AG04449 (cell line): ENCODE measurements at regions of chr5 and their contacts with region 1.

Region 1: DNA sequence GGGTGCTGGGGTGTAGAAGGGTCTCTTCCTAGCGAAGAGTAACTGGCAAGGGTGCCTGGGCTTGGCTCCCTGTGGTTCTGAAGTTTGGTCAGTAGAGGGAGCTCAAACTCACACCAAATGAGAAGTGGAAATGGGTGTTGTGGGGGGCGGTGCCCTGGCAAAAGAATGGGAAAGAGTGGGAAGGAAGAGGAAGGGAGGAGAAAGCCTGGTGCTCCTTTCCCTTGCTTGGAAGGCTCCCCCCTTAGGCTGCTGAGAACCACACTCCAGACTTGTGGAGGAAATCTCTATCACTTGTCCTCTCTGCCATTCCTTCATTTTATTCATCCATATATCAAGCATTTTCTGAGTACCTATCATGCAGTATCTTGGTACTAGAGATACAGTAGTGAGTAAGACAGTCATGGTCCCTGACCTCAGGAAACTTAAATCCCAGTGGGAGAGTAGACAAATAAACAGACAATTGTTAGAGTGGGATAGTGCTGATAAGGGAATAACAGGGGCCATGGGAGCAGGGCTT is 13.0 kb downstream of the SLC4A9 start:
- DNase-seq: no peak
- H3K4me3 ChIP-seq: no peak overlapping the region
- CTCF ChIP-seq: peak; percentile 76

Region 2: DNA sequence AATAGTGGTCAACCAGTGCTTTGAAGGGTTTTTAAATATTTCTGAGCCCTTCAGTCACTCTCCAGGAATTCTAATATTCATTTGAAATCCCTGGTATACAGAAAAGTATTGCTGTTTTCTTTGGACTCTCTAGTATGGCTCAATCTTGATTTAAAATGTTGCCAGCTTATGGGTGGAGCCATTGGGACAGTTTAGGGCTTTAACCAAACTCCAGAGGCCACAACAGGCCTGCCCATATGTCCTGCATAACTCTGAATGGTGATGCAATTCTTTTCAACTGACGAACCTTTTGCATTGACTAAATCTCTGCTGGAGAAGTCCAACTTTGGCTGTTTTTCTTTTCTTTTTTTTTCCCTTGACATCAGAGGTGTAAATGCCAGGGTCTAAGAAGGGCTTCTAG is 18.3 kb after region 1 on chr5:
- CTCF ChIA-PET with region 1: interaction called, 23 read pairs
- POLR2A ChIA-PET with region 1: no interaction called
- DNase-seq: no peak
- H3K4me3 ChIP-seq: no peak overlapping the region
- CTCF ChIP-seq: no peak

Region 3: DNA sequence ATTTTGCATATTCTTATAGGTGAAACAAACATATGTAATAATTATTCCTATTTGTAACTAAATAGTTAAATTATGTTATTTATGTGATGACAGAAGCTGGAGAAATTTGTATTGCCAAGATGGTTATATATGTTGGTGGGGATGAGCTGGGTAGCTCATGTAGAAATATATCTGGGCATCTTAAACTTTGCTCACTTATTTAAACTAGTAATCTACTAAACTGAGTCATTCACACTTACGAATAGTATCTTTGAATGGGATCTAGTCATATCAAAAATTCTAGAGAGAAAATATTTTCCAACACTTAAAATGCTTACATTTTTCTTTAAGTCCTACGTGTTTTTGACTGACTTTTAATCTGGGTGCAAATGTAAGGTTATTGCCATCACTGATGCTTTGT is 129.8 kb after region 1 on chr5:
- CTCF ChIA-PET with region 1: no interaction called
- POLR2A ChIA-PET with region 1: no interaction called
- DNase-seq: no peak
- H3K4me3 ChIP-seq: no peak overlapping the region
- CTCF ChIP-seq: no peak

Region 4: GRCh38 chr5:140632150-140633020 is 259.4 kb after region 1 on chr5:
- CTCF ChIA-PET with region 1: interaction called, 34 read pairs
- POLR2A ChIA-PET with region 1: no interaction called
- DNase-seq: no peak
- H3K4me3 ChIP-seq: peak overlapping the region; percentile 56
- CTCF ChIP-seq: no peak

Region 5: GRCh38 chr5:140647042-140647341 is 274.0 kb after region 1 on chr5:
- CTCF ChIA-PET with region 1: interaction called, 12 read pairs
- POLR2A ChIA-PET with region 1: no interaction called
- DNase-seq: no peak
- H3K4me3 ChIP-seq: peak overlapping the region; percentile 95
- CTCF ChIP-seq: no peak

Region 6: GRCh38 chr5:140725799-140726471 is 352.9 kb after region 1 on chr5:
- CTCF ChIA-PET with region 1: interaction called, 27 read pairs
- POLR2A ChIA-PET with region 1: no interaction called
- DNase-seq: peak; percentile 76
- H3K4me3 ChIP-seq: peak overlapping the region; percentile 63
- CTCF ChIP-seq: no peak